ENCODE measurements at regions of chr1 and their contacts with region 1.

Region 1: DNA sequence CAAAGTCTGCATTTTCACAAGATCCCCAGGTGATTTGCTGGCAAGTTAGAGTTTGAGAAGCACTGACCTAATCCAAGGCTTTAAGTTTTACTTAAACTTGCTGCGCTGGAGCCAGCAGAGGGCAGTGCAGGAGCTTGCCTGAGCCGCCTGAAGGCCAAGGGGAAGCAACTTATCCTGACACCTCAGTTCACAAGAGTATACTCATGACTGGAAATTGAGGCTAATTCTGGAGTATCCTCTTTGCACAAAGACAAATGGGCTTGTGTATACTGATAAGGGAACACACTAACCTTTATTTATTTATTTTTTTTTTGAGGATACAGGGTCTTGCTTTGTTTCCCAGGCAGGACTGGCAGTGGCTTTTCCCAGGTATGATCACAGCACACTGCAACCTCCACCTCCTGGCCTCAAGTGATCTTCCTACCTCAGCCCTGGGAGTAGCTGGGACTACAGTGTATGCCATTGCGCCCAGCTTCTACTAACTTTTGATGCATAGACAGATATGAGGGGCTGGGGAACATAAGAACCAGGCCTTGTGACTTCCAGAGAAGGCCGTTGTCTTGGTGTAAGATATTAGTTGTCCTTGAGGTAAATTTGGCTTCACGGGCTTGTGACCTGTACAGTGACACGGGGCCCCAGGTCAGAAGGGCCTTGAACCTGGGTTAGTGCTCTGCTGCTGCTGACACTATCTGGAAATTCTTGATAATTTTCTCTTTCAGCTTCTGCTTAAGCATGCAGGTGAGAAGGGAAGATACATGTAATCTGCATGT is 29.0 kb upstream of the SLAMF1 start:
- DNase-seq: peak; percentile 76
- ATAC-seq: peak; percentile 88
- H3K4me3 ChIP-seq: peak overlapping the region; percentile 2; the same call in 1 of the 2 replicates
- H3K27ac ChIP-seq: peak overlapping the region; percentile 62
- H3K4me1 ChIP-seq: peaks cover 48% of the 10 kb centered on the region
- H3K27me3 ChIP-seq: no peaks in the 10 kb centered on the region
- CTCF ChIP-seq: peak; percentile 86 to 95 (median 92)
- EP300 ChIP-seq: peak in 1 of 2 experiments; percentile 10; a peak in 1 of 4 replicates
- POLR2A ChIP-seq: peak; percentile 31; the same call in 1 of the 2 replicates
- RAD21 ChIP-seq: peak; percentile 87

Region 2: DNA sequence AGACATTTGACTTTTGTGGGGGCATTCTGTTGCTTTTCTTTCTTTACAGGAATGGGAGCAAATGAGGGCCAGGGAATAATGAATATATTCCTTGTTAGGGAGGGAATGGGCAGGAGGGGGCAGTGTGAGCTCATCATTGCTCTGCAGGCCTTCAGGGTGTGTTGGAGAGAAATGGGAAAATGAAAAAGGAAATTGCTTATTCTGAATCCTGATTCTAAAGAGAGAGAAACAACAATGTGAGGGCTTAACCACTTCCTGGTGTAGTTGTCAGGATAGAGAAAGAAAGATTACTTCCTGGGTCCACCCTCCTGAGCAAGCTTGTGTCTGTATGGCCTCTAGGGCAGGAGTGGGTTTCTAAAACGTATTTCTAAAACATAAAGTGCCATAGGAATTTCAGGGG is 247.2 kb before region 1 on chr1:
- CTCF ChIA-PET with region 1: interaction called, 15 read pairs
- POLR2A ChIA-PET with region 1: no interaction called
- RAD21 ChIA-PET with region 1: interaction called, 11 read pairs
- SMC1A ChIA-PET with region 1: interaction called, 24 read pairs
- in situ Hi-C with region 1: no loop called
- intact Hi-C with region 1: no loop called
- DNase-seq: peak; percentile 81
- ATAC-seq: peak; percentile 54
- H3K4me3 ChIP-seq: no peak overlapping the region
- H3K27ac ChIP-seq: peak overlapping the region; percentile 100
- H3K4me1 ChIP-seq: peaks cover 52% of the 10 kb centered on the region
- H3K27me3 ChIP-seq: no peaks in the 10 kb centered on the region
- CTCF ChIP-seq: peak; percentile 58 to 90 (median 58); a peak in 5 of 6 replicates
- EP300 ChIP-seq: no peak
- POLR2A ChIP-seq: no peak
- RAD21 ChIP-seq: peak; percentile 98

Region 3: GRCh38 chr1:160567858-160568682 is 107.8 kb before region 1 on chr1:
- CTCF ChIA-PET with region 1: no interaction called
- POLR2A ChIA-PET with region 1: no interaction called
- RAD21 ChIA-PET with region 1: no interaction called
- SMC1A ChIA-PET with region 1: no interaction called
- in situ Hi-C with region 1: no loop called
- intact Hi-C with region 1: no loop called
- DNase-seq: no peak
- ATAC-seq: peak; percentile 86
- H3K4me3 ChIP-seq: peak overlapping the region; percentile 28; the same call in 1 of the 2 replicates
- H3K27ac ChIP-seq: peak overlapping the region; percentile 68
- H3K4me1 ChIP-seq: peaks cover 22% of the 10 kb centered on the region
- H3K27me3 ChIP-seq: no peaks in the 10 kb centered on the region
- CTCF ChIP-seq: no peak
- EP300 ChIP-seq: no peak
- POLR2A ChIP-seq: peak; percentile 38; the same call in 1 of the 2 replicates
- RAD21 ChIP-seq: no peak

Region 4: DNA sequence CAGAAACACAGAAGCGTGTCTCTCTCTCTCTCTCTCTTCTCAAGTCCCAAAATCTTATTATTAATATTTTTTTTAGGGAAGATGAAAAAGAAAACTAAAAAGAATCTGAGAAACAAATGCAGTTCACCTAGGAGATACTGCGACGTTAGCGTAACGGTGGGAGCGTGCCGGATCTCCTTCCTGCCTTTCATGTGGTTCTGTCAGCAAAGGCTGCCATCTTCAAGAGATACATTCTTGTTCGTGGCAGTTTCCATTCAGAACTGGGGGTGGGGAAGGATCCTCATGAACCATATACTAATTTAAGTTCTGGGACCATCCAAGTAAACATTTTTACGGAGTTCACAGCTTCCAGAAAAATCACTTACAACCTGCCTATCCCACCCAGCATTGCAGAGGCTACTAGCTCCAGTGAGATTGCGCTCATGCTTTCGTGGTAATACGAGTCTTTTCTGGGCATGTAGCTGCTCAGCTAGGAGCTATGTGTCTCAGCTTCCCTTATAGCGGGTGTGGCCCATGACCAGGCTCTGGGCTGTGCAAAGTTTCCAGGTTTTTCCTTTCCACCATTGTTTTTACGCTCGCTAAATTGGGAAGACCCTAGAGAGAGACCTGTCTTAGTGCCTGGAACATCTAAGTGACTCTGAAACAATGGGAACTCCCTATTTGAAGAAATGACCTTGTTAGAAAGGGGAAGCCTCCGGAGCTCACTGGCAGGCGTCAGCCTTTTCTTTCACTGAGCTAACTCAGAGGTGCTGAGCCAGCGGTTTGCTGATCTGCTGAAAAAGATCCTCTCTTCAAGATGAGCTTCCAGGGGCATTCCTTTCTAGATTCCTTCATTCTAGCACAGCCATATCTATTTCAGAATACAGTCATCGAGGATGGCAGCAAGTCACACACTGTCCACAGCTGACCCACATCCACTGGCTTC is 46.3 kb before region 1 on chr1:
- CTCF ChIA-PET with region 1: interaction called, 14 read pairs
- POLR2A ChIA-PET with region 1: interaction called, 10 read pairs
- RAD21 ChIA-PET with region 1: interaction called, 132 read pairs
- SMC1A ChIA-PET with region 1: interaction called, 82 read pairs
- in situ Hi-C with region 1: no loop called
- intact Hi-C with region 1: no loop called
- DNase-seq: no peak
- ATAC-seq: no peak
- H3K4me3 ChIP-seq: peak overlapping the region; percentile 3; the same call in 1 of the 2 replicates
- H3K27ac ChIP-seq: peak overlapping the region; percentile 30
- H3K4me1 ChIP-seq: peaks cover 69% of the 10 kb centered on the region
- H3K27me3 ChIP-seq: no peaks in the 10 kb centered on the region
- CTCF ChIP-seq: no peak
- EP300 ChIP-seq: no peak
- POLR2A ChIP-seq: peak; percentile 46
- RAD21 ChIP-seq: no peak

Region 5: GRCh38 chr1:160646711-160647328 is 29.0 kb before region 1 on chr1 and contains the start of gene SLAMF1:
- CTCF ChIA-PET with region 1: interaction called, 50 read pairs
- POLR2A ChIA-PET with region 1: interaction called, 61 read pairs
- RAD21 ChIA-PET with region 1: interaction called, 117 read pairs
- SMC1A ChIA-PET with region 1: interaction called, 187 read pairs
- in situ Hi-C with region 1: no loop called
- intact Hi-C with region 1: loop called (anchors 2 kb)
- DNase-seq: peak; percentile 95
- ATAC-seq: peak; percentile 63
- H3K4me3 ChIP-seq: peak within 1 kb of the TSS; percentile 95
- H3K27ac ChIP-seq: peak within 1 kb of the TSS; percentile 95
- H3K4me1 ChIP-seq: peaks cover 19% of the 10 kb centered on the region
- H3K27me3 ChIP-seq: no peaks in the 10 kb centered on the region
- CTCF ChIP-seq: no peak
- EP300 ChIP-seq: peak; percentile 5 to 19; a peak in 1 of 4 replicates
- POLR2A ChIP-seq: peak; percentile 82
- RAD21 ChIP-seq: no peak
- polyA plus RNA-seq, gene SLAMF1: 128 to 145 TPM

Region 6: GRCh38 chr1:160664573-160665051 is 11.2 kb before region 1 on chr1:
- CTCF ChIA-PET with region 1: interaction called, 60 read pairs
- POLR2A ChIA-PET with region 1: interaction called, 20 read pairs
- RAD21 ChIA-PET with region 1: interaction called, 42 read pairs
- SMC1A ChIA-PET with region 1: interaction called, 36 read pairs
- in situ Hi-C with region 1: no loop called
- intact Hi-C with region 1: no loop called
- DNase-seq: peak; percentile 73
- ATAC-seq: peak; percentile 90
- H3K4me3 ChIP-seq: peak overlapping the region; percentile 48; the same call in 1 of the 2 replicates
- H3K27ac ChIP-seq: peak overlapping the region; percentile 75
- H3K4me1 ChIP-seq: peaks cover 42% of the 10 kb centered on the region
- H3K27me3 ChIP-seq: no peaks in the 10 kb centered on the region
- CTCF ChIP-seq: no peak
- EP300 ChIP-seq: peak; percentile 29 to 41; a peak in 1 of 4 replicates
- POLR2A ChIP-seq: no peak
- RAD21 ChIP-seq: no peak

Region 7: GRCh38 chr1:160711602-160712311 is 35.9 kb after region 1 on chr1 and contains the start of gene CD48:
- CTCF ChIA-PET with region 1: interaction called, 59 read pairs
- POLR2A ChIA-PET with region 1: interaction called, 27 read pairs
- RAD21 ChIA-PET with region 1: interaction called, 42 read pairs
- SMC1A ChIA-PET with region 1: interaction called, 79 read pairs
- in situ Hi-C with region 1: no loop called
- intact Hi-C with region 1: loop called (anchors 5 kb)
- DNase-seq: no peak
- ATAC-seq: peak; percentile 56
- H3K4me3 ChIP-seq: peak within 1 kb of the TSS; percentile 93
- H3K27ac ChIP-seq: peak within 1 kb of the TSS; percentile 100
- H3K4me1 ChIP-seq: peaks cover 18% of the 10 kb centered on the region
- H3K27me3 ChIP-seq: no peaks in the 10 kb centered on the region
- CTCF ChIP-seq: no peak
- EP300 ChIP-seq: no peak; a peak in 2 of 4 replicates
- POLR2A ChIP-seq: peak; percentile 81
- RAD21 ChIP-seq: no peak
- polyA plus RNA-seq, gene CD48: 667 to 776 TPM

Region 8: GRCh38 chr1:160726498-160727315 is 50.9 kb after region 1 on chr1:
- CTCF ChIA-PET with region 1: interaction called, 95 read pairs
- POLR2A ChIA-PET with region 1: interaction called, 5 read pairs
- RAD21 ChIA-PET with region 1: interaction called, 18 read pairs
- SMC1A ChIA-PET with region 1: interaction called, 70 read pairs
- in situ Hi-C with region 1: no loop called
- intact Hi-C with region 1: loop called (anchors 1 kb)
- DNase-seq: no peak
- ATAC-seq: peak; percentile 80
- H3K4me3 ChIP-seq: no peak overlapping the region
- H3K27ac ChIP-seq: peak overlapping the region; percentile 85
- H3K4me1 ChIP-seq: peaks cover 40% of the 10 kb centered on the region
- H3K27me3 ChIP-seq: no peaks in the 10 kb centered on the region
- CTCF ChIP-seq: peak; percentile 81 to 92 (median 91); a peak in 5 of 6 replicates
- EP300 ChIP-seq: no peak
- POLR2A ChIP-seq: no peak
- RAD21 ChIP-seq: peak; percentile 99